ENCODE measurements at regions of chr2 and their contacts with region 1.

Region 1: DNA sequence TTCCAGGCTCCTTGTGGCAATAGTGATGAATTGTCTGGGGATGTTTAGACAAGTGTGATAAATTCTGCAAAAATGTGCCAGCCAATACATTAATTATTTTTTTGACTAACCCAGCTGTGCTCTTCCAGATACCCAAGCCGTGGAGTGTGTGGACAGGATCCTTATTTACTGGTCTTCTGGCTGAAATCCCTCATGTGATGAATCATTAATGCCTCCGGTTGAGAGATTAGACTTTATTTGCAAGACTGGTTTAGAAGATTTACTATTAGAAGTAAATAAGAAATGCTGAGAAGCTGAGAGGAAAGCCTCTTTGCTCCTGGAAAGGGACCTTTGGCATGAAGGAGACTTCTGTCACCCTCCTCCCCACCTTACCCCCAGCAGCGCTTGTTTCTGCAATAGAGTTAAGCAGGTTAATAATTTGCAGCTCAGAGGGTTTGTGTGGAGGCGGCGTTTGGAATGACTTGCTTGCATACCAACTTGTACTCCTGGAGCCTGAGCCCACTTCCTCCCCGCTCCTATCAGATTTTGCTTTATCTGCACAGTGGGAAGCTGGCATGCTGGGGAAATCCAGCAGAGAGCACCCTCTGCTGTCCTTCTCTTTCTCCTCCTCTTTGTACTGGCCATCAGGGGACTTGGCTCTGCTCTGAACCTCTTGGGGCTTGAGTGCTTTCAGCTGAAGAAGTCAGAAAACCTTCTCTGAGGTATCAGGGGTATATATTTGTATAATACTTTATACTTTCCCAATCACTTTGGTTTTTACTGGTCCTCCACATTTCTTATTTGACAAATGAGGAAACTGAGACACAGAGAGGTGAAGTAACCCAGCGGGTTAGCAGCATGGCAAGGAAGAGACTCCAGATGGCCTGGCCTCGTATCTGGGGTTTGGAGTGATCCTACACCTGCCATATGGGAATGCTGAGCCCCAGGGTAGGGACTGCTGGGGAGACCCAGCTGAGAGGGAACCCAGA is 16.3 kb downstream of the SLC3A1 start:
- DNase-seq: no peak
- ATAC-seq: peak in 5 of 8 donors; percentile 53 to 82 (median 65)
- H3K4me3 ChIP-seq: no peak overlapping the region
- H3K27ac ChIP-seq: no peak overlapping the region
- H3K4me1 ChIP-seq: peaks cover 0 to 9% (median 4%) of the 10 kb centered on the region in 9 donors
- H3K27me3 ChIP-seq: no peaks in the 10 kb centered on the region
- CTCF ChIP-seq: peak in 8 of 9 donors; percentile 27 to 57 (median 49)

Region 2: DNA sequence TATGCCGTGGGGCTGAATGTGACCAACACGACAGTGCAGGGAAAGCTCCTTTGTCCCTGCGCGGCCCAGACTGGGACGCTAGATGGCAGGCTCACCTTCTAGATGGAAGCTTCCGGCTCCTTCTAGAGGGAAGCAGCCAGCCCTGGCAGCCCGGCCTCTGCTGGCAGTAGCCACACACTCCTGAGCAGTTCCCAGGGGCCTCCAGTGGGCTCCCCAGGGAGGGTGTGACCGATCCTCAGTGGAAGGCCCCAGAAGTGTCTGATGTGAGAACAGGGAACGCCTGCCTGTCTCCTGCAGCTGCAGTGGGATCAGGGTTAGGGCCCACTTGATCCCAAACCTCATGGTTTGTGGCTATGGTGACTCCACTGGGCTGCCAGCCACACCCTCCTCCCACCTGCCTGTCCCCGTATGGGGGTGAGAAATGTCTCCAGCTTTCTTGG is 247.3 kb before region 1 on chr2:
- intact Hi-C with region 1: loop called in 3 of 10 experiments (anchors 2 to 10 kb)
- DNase-seq: peak; percentile 78 to 81
- ATAC-seq: peak; percentile 79 to 98 (median 96)
- H3K4me3 ChIP-seq: no peak overlapping the region
- H3K27ac ChIP-seq: no peak overlapping the region
- H3K4me1 ChIP-seq: peaks cover 0 to 7% (median 3%) of the 10 kb centered on the region in 9 donors
- H3K27me3 ChIP-seq: peaks cover 0 to 4% (median 0%) of the 10 kb centered on the region in 7 donors
- CTCF ChIP-seq: peak; percentile 46 to 94 (median 88)

Region 3: DNA sequence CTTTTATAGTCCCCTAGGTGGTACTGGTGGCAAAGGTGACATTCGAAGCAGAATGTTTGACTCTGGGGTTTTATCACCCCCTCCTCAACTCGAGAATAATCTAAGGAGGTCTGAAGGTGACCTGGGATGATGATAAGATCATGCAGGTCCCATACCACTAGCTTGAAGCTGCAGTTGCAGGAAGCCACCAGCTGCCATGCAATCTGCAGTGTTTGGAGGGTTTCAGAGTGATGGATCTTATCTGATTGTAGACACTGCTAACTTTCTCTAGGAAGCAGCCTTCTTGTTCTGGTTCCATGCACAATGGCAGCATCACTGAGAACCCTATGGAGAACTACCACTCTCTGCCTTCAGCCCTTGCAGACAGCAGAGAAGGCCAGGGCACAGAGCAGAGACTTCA is 236.3 kb before region 1 on chr2:
- intact Hi-C with region 1: no loop called
- DNase-seq: no peak
- ATAC-seq: no peak
- H3K4me3 ChIP-seq: no peak overlapping the region
- H3K27ac ChIP-seq: no peak overlapping the region
- H3K4me1 ChIP-seq: no peaks in the 10 kb centered on the region
- H3K27me3 ChIP-seq: no peaks in the 10 kb centered on the region
- CTCF ChIP-seq: no peak

Region 4: GRCh38 chr2:44098050-44098449 is 193.5 kb before region 1 on chr2:
- intact Hi-C with region 1: loop called in 1 of 10 experiments (anchors 5 kb)
- DNase-seq: no peak
- ATAC-seq: no peak
- H3K4me3 ChIP-seq: no peak overlapping the region
- H3K27ac ChIP-seq: no peak overlapping the region
- H3K4me1 ChIP-seq: peaks cover 0 to 17% (median 9%) of the 10 kb centered on the region in 9 donors
- H3K27me3 ChIP-seq: no peaks in the 10 kb centered on the region
- CTCF ChIP-seq: no peak

Measured in heart right ventricle (tissue), 16 donors.